Activated naive CD4-positive, alpha-beta T cell treated with anti-CD3 and anti-CD28 coated beads for 36 hours (primary cell): ENCODE measurements at regions of chr6 and their contacts with region 1.

Region 1: DNA sequence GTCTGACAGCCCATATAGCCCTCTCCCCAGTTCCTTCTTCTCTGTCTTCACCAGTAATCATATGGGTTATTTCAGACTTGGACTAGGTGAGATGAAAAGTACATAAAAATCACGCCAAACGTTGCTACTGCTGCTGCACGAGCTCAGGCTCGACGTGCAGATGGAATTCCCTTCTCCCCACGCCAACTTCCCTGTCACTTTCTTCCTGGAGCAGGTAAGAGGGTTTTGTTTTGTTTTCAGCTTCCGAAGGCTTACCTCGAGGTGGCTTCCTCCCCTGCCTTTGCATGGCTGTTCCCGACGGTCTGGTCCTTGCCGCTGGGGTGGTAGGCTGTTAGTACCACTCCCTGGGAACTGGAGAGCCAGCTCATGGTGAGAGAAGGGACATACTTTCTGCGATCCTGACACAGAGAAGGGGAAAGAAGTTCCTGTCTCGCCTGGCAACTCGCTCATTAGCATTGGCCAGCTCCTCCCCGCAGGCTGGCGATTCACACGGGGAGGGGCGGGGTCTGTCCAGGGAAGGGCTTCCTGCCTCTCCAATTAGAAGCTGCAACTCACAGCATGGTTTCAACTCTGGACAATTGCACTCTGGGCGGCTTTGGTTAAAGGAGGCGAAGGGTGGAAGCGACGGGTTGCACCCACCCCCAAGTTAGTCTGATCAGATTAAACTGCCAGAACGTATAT is at the start of gene ARHGAP18:
- DNase-seq: peak; percentile 81
- H3K4me3 Mint-ChIP-seq: peak within 1 kb of the TSS; percentile 90
- H3K27ac Mint-ChIP-seq: peak within 1 kb of the TSS; percentile 51
- H3K4me1 Mint-ChIP-seq: peaks cover 16% of the 10 kb centered on the region
- H3K27me3 Mint-ChIP-seq: peaks cover 3% of the 10 kb centered on the region
- total RNA-seq, gene ARHGAP18: 3.2 to 3.7 TPM

Region 2: GRCh38 chr6:129695373-129696027 is 14.4 kb before region 1 on chr6:
- CTCF ChIA-PET with region 1: interaction called, 3 read pairs
- intact Hi-C with region 1: loop called (anchors 1 kb)
- DNase-seq: peak; percentile 67
- H3K4me3 Mint-ChIP-seq: no peak overlapping the region
- H3K27ac Mint-ChIP-seq: no peak overlapping the region
- H3K4me1 Mint-ChIP-seq: peaks cover 17% of the 10 kb centered on the region
- H3K27me3 Mint-ChIP-seq: no peaks in the 10 kb centered on the region